Body of pancreas (tissue), 4 donors: ENCODE measurements at regions of chr4 and their contacts with region 1.

Region 1: DNA sequence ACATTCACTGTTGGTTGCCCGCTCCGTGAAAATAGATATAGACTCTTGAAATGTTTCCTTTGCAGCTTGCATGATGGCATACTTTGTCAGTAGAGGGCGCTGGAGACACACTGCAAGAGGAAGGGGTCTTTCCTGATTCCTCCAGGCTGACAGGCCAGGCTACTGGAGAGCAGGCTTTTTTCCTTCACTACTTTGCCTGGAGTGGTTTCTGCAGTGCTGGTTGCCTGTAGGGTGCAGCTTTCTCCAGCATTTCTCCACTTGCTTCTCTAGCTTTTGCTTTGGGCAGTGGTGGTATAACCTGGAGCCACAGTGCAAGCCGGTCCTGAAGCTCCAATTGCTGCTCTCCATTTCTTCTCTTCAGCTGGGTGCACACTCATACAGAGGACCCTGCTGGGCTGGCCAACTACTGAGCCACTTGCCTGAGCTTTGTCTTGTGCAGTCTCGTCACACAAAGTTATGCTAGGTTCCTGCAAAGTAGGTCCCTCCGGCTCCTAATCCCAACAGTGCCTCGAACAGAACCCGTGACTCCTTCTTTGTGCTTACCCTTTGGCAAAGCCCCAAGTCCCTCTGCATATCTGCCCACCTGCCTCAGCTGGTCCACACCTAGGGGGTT is 46.3 kb downstream of the RASSF6 start:
- DNase-seq: peak; percentile 83 to 90 (median 86)
- ATAC-seq: peak; percentile 88
- H3K4me3 ChIP-seq: no peak overlapping the region
- H3K27ac ChIP-seq: peak overlapping the region in 1 of 4 donors; percentile 29
- H3K4me1 ChIP-seq: peaks cover 25% of the 10 kb centered on the region
- H3K27me3 ChIP-seq: no peaks in the 10 kb centered on the region
- CTCF ChIP-seq: peak; percentile 83 to 97 (median 95)
- POLR2A ChIP-seq: no peak

Region 2: GRCh38 chr4:73653695-73654106 is 79.8 kb after region 1 on chr4:
- intact Hi-C with region 1: loop called (anchors 10 kb)
- DNase-seq: peak; percentile 81 to 93 (median 90)
- ATAC-seq: peak; percentile 98
- H3K4me3 ChIP-seq: no peak overlapping the region
- H3K27ac ChIP-seq: peak overlapping the region in 1 of 4 donors; percentile 17
- H3K4me1 ChIP-seq: peaks cover 8% of the 10 kb centered on the region
- H3K27me3 ChIP-seq: no peaks in the 10 kb centered on the region
- CTCF ChIP-seq: peak; percentile 40 to 98 (median 73)
- POLR2A ChIP-seq: no peak